Common myeloid progenitor, CD34-positive (primary cell): ENCODE measurements at regions of chr2 and their contacts with region 1.

Region 1: GRCh38 chr2:101036562-101037457 is 34.7 kb downstream of the RPL31 start:
- DNase-seq: peak in 2 of 3 donors; percentile 26 to 42
- H3K4me3 ChIP-seq: no peak overlapping the region
- H3K27ac ChIP-seq: no peak overlapping the region
- H3K4me1 ChIP-seq: peaks cover 0 to 7% (median 0%) of the 10 kb centered on the region in 4 experiments
- H3K27me3 ChIP-seq: no peaks in the 10 kb centered on the region

Region 2: GRCh38 chr2:101004671-101005325 is 32.0 kb before region 1 on chr2:
- CTCF ChIA-PET with region 1: no interaction called
- POLR2A ChIA-PET with region 1: no interaction called
- DNase-seq: no peak
- H3K4me3 ChIP-seq: no peak overlapping the region
- H3K27ac ChIP-seq: peak overlapping the region in 1 of 2 experiments; percentile 95
- H3K4me1 ChIP-seq: peaks cover 12 to 26% (median 19%) of the 10 kb centered on the region in 4 experiments
- H3K27me3 ChIP-seq: no peaks in the 10 kb centered on the region

Region 3: GRCh38 chr2:101026253-101026701 is 10.5 kb before region 1 on chr2:
- CTCF ChIA-PET with region 1: interaction called, 14 read pairs
- POLR2A ChIA-PET with region 1: no interaction called
- DNase-seq: no peak
- H3K4me3 ChIP-seq: no peak overlapping the region
- H3K27ac ChIP-seq: no peak overlapping the region
- H3K4me1 ChIP-seq: no peaks in the 10 kb centered on the region
- H3K27me3 ChIP-seq: no peaks in the 10 kb centered on the region

Region 4: DNA sequence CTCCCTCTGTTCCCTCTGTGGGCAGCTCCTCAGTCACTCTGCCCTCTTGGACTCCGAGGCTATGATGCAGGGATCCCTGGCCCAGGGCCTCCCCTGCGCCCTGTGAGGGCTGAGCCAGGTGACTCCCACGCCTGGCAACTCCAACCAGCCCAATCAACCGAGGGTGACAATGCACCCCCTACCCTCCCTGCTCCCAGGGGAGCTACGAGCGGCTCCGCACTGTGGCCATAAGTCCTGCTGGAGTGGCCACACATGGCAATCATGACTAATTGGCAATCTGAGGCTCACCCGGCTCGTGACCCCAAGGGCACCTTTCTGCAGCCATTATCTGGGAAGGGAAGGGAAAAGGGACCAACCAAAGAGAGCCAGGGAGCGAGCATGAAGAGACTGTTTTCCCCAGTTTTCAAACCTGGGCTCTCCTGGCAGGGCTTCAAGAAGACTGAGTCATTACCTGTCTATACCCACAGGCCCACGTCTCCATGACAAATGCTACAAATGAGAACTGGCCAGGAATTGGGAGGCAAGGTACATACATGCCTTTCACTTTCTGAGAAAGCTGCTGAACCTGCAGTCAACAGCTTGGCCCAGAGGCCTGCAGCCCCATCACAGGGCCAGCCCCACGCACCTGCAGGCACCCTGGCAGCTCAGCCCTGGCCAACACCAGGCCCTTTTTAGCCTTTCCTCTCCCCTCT is 10.4 kb after region 1 on chr2:
- CTCF ChIA-PET with region 1: interaction called, 13 read pairs
- POLR2A ChIA-PET with region 1: no interaction called
- DNase-seq: peak in 1 of 3 donors; percentile 5
- H3K4me3 ChIP-seq: no peak overlapping the region
- H3K27ac ChIP-seq: no peak overlapping the region
- H3K4me1 ChIP-seq: no peaks in the 10 kb centered on the region
- H3K27me3 ChIP-seq: no peaks in the 10 kb centered on the region

Region 5: DNA sequence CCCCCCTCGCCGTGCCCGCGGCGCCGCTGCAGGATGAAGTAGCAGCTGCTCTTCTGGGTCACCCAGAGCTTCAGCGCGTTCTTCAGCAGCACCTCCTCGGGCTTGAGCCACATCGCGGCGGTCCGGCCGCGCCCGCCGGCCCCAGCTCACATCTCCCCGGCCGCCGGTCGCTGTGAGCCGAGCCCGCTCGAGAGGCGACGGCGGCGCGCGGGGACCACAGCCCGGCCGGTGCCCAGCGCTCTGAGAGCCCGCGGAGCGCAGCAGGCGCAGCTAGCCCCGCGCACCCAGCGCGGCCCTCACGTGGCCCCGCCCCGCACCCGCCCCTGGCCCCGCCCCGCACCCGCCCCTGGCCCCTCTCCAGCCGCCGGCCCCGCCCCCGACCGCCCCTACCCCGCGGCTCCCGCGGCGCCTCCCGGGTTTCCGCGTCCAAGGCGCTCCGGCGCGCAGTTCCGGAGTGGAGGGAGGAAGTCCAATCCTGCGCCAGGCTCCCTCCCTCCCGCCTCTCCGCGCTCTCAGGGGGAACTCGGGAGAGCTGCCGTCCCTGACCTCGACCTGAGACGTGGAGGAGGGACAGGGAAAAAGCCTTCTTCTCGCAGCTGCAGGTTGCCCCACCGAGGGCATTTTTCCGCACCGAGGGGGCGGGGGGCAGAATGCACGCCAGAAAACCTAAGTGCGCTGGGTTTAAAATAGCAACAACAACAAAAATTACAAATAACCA is 114.5 kb after region 1 on chr2 and contains the start of gene TBC1D8:
- CTCF ChIA-PET with region 1: interaction called, 34 read pairs
- POLR2A ChIA-PET with region 1: no interaction called
- DNase-seq: peak; percentile 25 to 65 (median 53)
- H3K4me3 ChIP-seq: peak within 1 kb of the TSS; percentile 50 to 83 (median 71)
- H3K27ac ChIP-seq: no peak within 1 kb of the TSS
- H3K4me1 ChIP-seq: peaks cover 11 to 26% (median 19%) of the 10 kb centered on the region in 4 experiments
- H3K27me3 ChIP-seq: peaks cover 0 to 22% (median 11%) of the 10 kb centered on the region in 5 experiments

Region 6: GRCh38 chr2:101205521-101205998 is 168.8 kb after region 1 on chr2:
- CTCF ChIA-PET with region 1: interaction called, 34 read pairs
- POLR2A ChIA-PET with region 1: no interaction called
- DNase-seq: peak; percentile 71 to 79 (median 76)
- H3K4me3 ChIP-seq: peak overlapping the region in 4 of 7 experiments; percentile 13 to 68 (median 43)
- H3K27ac ChIP-seq: peak overlapping the region in 1 of 2 experiments; percentile 34
- H3K4me1 ChIP-seq: peaks cover 0 to 5% (median 3%) of the 10 kb centered on the region in 4 experiments
- H3K27me3 ChIP-seq: no peaks in the 10 kb centered on the region